ENCODE measurements at regions of chr5 and their contacts with region 1.

Region 1: GRCh38 chr5:143355720-143356119 is 47.8 kb downstream of the NR3C1 start:
- DNase-seq: no peak
- ATAC-seq: peak; percentile 25; the same call in 2 of the 3 replicates
- H3K4me3 ChIP-seq: no peak overlapping the region
- H3K27ac ChIP-seq: no peak overlapping the region
- H3K4me1 ChIP-seq: peaks cover 54% of the 10 kb centered on the region
- H3K27me3 ChIP-seq: no peaks in the 10 kb centered on the region
- CTCF ChIP-seq: no peak
- EP300 ChIP-seq: no peak
- POLR2A ChIP-seq: no peak
- RAD21 ChIP-seq: no peak

Region 2: GRCh38 chr5:143338658-143339366 is 16.9 kb before region 1 on chr5:
- CTCF ChIA-PET with region 1: interaction called, 7 read pairs
- POLR2A ChIA-PET with region 1: interaction called, 4 read pairs
- RAD21 ChIA-PET with region 1: interaction called, 4 read pairs
- SMC1A ChIA-PET with region 1: interaction called, 29 read pairs
- in situ Hi-C with region 1: no loop called
- intact Hi-C with region 1: no loop called
- DNase-seq: no peak
- ATAC-seq: peak; percentile 50
- H3K4me3 ChIP-seq: no peak overlapping the region
- H3K27ac ChIP-seq: no peak overlapping the region
- H3K4me1 ChIP-seq: peaks cover 5% of the 10 kb centered on the region; the same call in 1 of the 2 replicates
- H3K27me3 ChIP-seq: no peaks in the 10 kb centered on the region
- CTCF ChIP-seq: no peak
- EP300 ChIP-seq: no peak
- POLR2A ChIP-seq: no peak
- RAD21 ChIP-seq: no peak

Region 3: GRCh38 chr5:143370440-143370839 is 14.7 kb after region 1 on chr5:
- CTCF ChIA-PET with region 1: interaction called, 5 read pairs
- POLR2A ChIA-PET with region 1: interaction called, 10 read pairs
- RAD21 ChIA-PET with region 1: interaction called, 5 read pairs
- SMC1A ChIA-PET with region 1: interaction called, 12 read pairs
- in situ Hi-C with region 1: no loop called
- intact Hi-C with region 1: no loop called
- DNase-seq: no peak
- ATAC-seq: no peak
- H3K4me3 ChIP-seq: no peak overlapping the region
- H3K27ac ChIP-seq: no peak overlapping the region
- H3K4me1 ChIP-seq: no peaks in the 10 kb centered on the region
- H3K27me3 ChIP-seq: no peaks in the 10 kb centered on the region
- CTCF ChIP-seq: no peak
- EP300 ChIP-seq: no peak
- POLR2A ChIP-seq: no peak
- RAD21 ChIP-seq: no peak

Region 4: GRCh38 chr5:143376911-143377813 is 21.4 kb after region 1 on chr5:
- CTCF ChIA-PET with region 1: interaction called, 5 read pairs
- POLR2A ChIA-PET with region 1: interaction called, 11 read pairs
- RAD21 ChIA-PET with region 1: interaction called, 3 read pairs
- SMC1A ChIA-PET with region 1: interaction called, 12 read pairs
- in situ Hi-C with region 1: no loop called
- intact Hi-C with region 1: no loop called
- DNase-seq: no peak
- ATAC-seq: peak; percentile 30
- H3K4me3 ChIP-seq: no peak overlapping the region
- H3K27ac ChIP-seq: no peak overlapping the region
- H3K4me1 ChIP-seq: peaks cover 9% of the 10 kb centered on the region; the same call in 1 of the 2 replicates
- H3K27me3 ChIP-seq: no peaks in the 10 kb centered on the region
- CTCF ChIP-seq: no peak
- EP300 ChIP-seq: no peak
- POLR2A ChIP-seq: peak; percentile 50; the same call in 1 of the 2 replicates
- RAD21 ChIP-seq: no peak

Region 5: DNA sequence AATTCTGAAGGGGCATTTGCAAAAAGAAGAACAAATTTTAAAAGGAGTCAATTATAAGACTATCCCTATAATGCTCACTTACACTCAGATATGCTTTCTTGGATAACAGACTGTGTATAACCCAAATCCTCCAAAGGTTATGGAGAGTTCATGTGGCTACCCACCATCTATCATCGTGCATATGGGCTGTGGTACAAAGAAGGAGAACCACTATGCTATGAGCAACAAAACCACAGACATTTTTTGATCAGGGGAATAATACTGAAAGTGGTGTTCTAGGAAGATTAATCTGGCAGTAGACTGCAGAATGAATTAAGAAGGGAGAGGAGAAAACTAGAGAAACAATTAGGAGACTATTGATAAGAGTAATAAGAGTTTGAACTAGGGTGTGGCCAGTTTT is 31.0 kb after region 1 on chr5:
- CTCF ChIA-PET with region 1: interaction called, 6 read pairs
- POLR2A ChIA-PET with region 1: interaction called, 3 read pairs
- RAD21 ChIA-PET with region 1: interaction called, 8 read pairs
- SMC1A ChIA-PET with region 1: interaction called, 29 read pairs
- in situ Hi-C with region 1: no loop called
- intact Hi-C with region 1: no loop called
- DNase-seq: no peak
- ATAC-seq: no peak
- H3K4me3 ChIP-seq: no peak overlapping the region
- H3K27ac ChIP-seq: no peak overlapping the region
- H3K4me1 ChIP-seq: no peaks in the 10 kb centered on the region
- H3K27me3 ChIP-seq: no peaks in the 10 kb centered on the region
- CTCF ChIP-seq: no peak
- EP300 ChIP-seq: no peak
- POLR2A ChIP-seq: no peak
- RAD21 ChIP-seq: no peak